ENCODE measurements at regions of chr10 and their contacts with region 1.

Region 1: GRCh38 chr10:22340362-22341189 is 4.7 kb upstream of the SPAG6 start:
- DNase-seq: peak; percentile 69
- ATAC-seq: peak; percentile 79
- H3K4me3 ChIP-seq: peak overlapping the region; percentile 66
- H3K27ac ChIP-seq: peak overlapping the region; percentile 77
- H3K4me1 ChIP-seq: peaks cover 24% of the 10 kb centered on the region
- H3K27me3 ChIP-seq: peaks cover 11 to 33% of the 10 kb centered on the region in 2 experiments
- CTCF ChIP-seq: no peak
- EP300 ChIP-seq: 0 out of 4 replicates have a peak, but pooled peaks of 1 of the 2 experiments have one; percentile 16
- POLR2A ChIP-seq: no peak; the same call in none of the 2 replicates
- RAD21 ChIP-seq: no peak

Region 2: GRCh38 chr10:22251751-22252223 is 88.8 kb before region 1 on chr10:
- CTCF ChIA-PET with region 1: no interaction called
- POLR2A ChIA-PET with region 1: no interaction called
- RAD21 ChIA-PET with region 1: no interaction called
- SMC1A ChIA-PET with region 1: no interaction called
- in situ Hi-C with region 1: no loop called
- intact Hi-C with region 1: no loop called
- DNase-seq: no peak
- ATAC-seq: peak; percentile 66
- H3K4me3 ChIP-seq: peak overlapping the region; percentile 79
- H3K27ac ChIP-seq: peak overlapping the region; percentile 90
- H3K4me1 ChIP-seq: peaks cover 7% of the 10 kb centered on the region
- H3K27me3 ChIP-seq: peaks cover 0 to 2% of the 10 kb centered on the region in 2 experiments; a peak in 3 of 4 replicates
- CTCF ChIP-seq: no peak
- EP300 ChIP-seq: no peak
- POLR2A ChIP-seq: peak; percentile 62; the same call in 1 of the 2 replicates
- RAD21 ChIP-seq: no peak

Region 3: DNA sequence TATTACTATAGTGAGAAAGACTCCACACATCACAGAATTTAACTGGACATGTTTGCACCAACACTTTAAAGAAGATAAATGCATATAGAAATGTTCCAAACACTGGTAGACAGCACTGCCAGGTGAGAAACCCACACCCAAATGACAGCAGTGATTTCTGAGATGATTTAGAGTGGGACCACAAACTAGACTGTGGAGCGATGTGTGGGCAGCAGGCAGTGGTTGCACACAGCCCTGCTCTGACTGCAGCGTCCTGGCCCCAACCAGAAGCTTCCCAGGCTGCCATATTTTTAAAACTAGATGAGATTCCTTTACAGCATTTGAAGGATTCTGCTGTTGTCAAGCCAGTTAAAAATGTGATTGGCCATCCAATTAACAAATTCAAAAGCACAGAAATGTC is 72.1 kb before region 1 on chr10:
- CTCF ChIA-PET with region 1: no interaction called
- POLR2A ChIA-PET with region 1: no interaction called
- RAD21 ChIA-PET with region 1: no interaction called
- SMC1A ChIA-PET with region 1: no interaction called
- in situ Hi-C with region 1: no loop called
- intact Hi-C with region 1: no loop called
- DNase-seq: no peak
- ATAC-seq: no peak
- H3K4me3 ChIP-seq: no peak overlapping the region
- H3K27ac ChIP-seq: no peak overlapping the region
- H3K4me1 ChIP-seq: no peaks in the 10 kb centered on the region
- H3K27me3 ChIP-seq: no peaks in the 10 kb centered on the region; a peak in 2 of 4 replicates
- CTCF ChIP-seq: no peak
- EP300 ChIP-seq: no peak
- POLR2A ChIP-seq: no peak
- RAD21 ChIP-seq: no peak

Region 4: GRCh38 chr10:22294695-22295094 is 45.9 kb before region 1 on chr10:
- CTCF ChIA-PET with region 1: no interaction called
- POLR2A ChIA-PET with region 1: no interaction called
- RAD21 ChIA-PET with region 1: no interaction called
- SMC1A ChIA-PET with region 1: no interaction called
- in situ Hi-C with region 1: no loop called
- intact Hi-C with region 1: no loop called
- DNase-seq: no peak
- ATAC-seq: no peak
- H3K4me3 ChIP-seq: no peak overlapping the region
- H3K27ac ChIP-seq: no peak overlapping the region
- H3K4me1 ChIP-seq: no peaks in the 10 kb centered on the region
- H3K27me3 ChIP-seq: no peaks in the 10 kb centered on the region
- CTCF ChIP-seq: no peak
- EP300 ChIP-seq: no peak
- POLR2A ChIP-seq: no peak
- RAD21 ChIP-seq: no peak

Region 5: DNA sequence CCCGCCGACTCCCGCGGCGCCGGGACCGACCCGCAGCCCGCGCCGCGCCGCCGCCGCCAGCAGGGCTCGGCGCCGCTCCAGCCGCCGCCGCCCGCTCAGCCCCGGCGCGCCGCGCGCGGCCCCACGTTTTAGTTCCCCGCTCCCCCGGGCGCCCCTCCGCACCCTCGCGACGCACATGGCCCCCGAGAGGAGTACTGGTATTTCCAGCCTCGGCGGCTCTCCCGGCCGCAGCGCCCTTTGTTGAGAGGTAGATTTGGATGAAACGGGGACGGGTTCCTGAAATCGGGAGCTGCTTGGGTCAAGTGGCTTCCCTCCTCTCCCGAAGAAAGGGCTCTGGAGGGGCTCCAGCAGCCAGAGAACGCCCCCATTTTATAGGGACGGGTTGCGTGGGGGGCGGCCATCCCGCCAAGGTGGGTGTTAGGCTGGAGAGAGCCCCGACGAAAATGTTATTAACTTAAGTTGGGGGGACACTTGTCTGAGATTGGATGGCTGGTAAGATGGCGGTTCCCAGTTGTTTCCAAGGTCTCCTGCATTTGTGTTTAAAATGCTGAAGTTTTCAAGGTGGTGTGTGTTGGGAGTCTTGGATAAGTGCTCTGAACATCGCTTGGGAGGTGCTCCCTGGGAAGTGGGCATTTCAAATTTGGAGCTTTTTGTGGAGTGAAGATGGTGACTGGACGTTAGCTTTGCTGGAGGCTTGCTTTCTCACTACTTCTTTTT is 18.5 kb before region 1 on chr10:
- CTCF ChIA-PET with region 1: interaction called, 6 read pairs
- POLR2A ChIA-PET with region 1: interaction called, 15 read pairs
- RAD21 ChIA-PET with region 1: interaction called, 16 read pairs
- SMC1A ChIA-PET with region 1: interaction called, 8 read pairs
- in situ Hi-C with region 1: no loop called
- intact Hi-C with region 1: loop called (anchors 2 kb)
- DNase-seq: no peak
- ATAC-seq: no peak
- H3K4me3 ChIP-seq: peak overlapping the region; percentile 81
- H3K27ac ChIP-seq: no peak overlapping the region
- H3K4me1 ChIP-seq: peaks cover 25% of the 10 kb centered on the region
- H3K27me3 ChIP-seq: peaks cover 3 to 14% of the 10 kb centered on the region in 2 experiments
- CTCF ChIP-seq: no peak
- EP300 ChIP-seq: no peak
- POLR2A ChIP-seq: no peak
- RAD21 ChIP-seq: no peak

Region 6: GRCh38 chr10:22436884-22437619 is 96.5 kb after region 1 on chr10:
- CTCF ChIA-PET with region 1: interaction called, 3 read pairs
- POLR2A ChIA-PET with region 1: no interaction called
- RAD21 ChIA-PET with region 1: no interaction called
- SMC1A ChIA-PET with region 1: no interaction called
- in situ Hi-C with region 1: no loop called
- intact Hi-C with region 1: loop called (anchors 1 kb)
- DNase-seq: peak; percentile 36
- ATAC-seq: peak; percentile 88
- H3K4me3 ChIP-seq: peak overlapping the region; percentile 71
- H3K27ac ChIP-seq: peak overlapping the region; percentile 45
- H3K4me1 ChIP-seq: peaks cover 10% of the 10 kb centered on the region
- H3K27me3 ChIP-seq: no peaks in the 10 kb centered on the region; a peak in 1 of 4 replicates
- CTCF ChIP-seq: 0 out of 6 replicates have a peak, but pooled peaks of 2 of the 3 experiments have one; percentile 1 to 6
- EP300 ChIP-seq: no peak
- POLR2A ChIP-seq: peak; percentile 98
- RAD21 ChIP-seq: peak; percentile 32; the same call in 1 of the 2 replicates

Region 7: DNA sequence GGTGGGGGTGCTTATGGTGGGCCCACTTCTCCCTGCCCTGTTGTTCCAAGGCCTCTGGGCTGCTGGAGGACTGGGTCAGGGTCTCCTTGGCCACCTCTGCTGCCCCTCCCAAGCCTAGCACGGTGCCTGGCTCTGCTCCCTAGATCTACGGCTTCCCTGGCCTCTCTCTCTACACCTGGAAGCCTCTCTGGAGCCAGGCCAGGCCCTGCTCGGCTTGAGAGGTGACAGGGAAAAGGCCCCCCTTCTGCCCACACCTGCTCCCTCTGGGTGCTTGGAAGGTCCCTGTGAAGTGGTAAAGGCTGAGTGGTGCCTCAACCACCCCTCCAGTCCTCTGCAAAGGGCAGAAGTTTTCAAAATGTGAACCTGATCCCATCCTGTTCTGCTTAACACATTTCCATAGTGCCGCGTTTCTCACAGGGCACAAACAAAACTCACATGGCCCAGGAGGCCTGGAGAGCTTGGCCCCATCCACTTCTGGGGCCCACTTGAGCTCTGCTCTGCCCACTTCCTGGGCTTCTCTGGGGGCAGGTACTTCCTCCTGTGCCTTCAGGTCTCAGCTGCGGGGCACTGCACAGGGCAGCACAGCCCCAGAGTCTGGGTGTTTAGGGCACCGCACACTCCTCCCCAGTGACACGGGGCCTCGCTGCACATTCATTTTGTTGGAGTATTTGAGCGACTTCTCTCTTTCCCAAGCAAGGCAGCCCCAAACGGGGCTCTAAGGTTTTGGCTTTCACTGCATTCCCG is 203.9 kb after region 1 on chr10:
- CTCF ChIA-PET with region 1: no interaction called
- POLR2A ChIA-PET with region 1: no interaction called
- RAD21 ChIA-PET with region 1: no interaction called
- SMC1A ChIA-PET with region 1: no interaction called
- in situ Hi-C with region 1: no loop called
- intact Hi-C with region 1: no loop called
- DNase-seq: no peak
- ATAC-seq: no peak; the same call in 1 of the 3 replicates
- H3K4me3 ChIP-seq: no peak overlapping the region
- H3K27ac ChIP-seq: no peak overlapping the region
- H3K4me1 ChIP-seq: no peaks in the 10 kb centered on the region
- H3K27me3 ChIP-seq: no peaks in the 10 kb centered on the region
- CTCF ChIP-seq: no peak
- EP300 ChIP-seq: no peak
- POLR2A ChIP-seq: 0 out of 2 replicates have a peak, but pooled peaks have one; percentile 9
- RAD21 ChIP-seq: no peak

Measured in GM12878 (cell line).